B cell (primary cell): ENCODE measurements at regions of chr19 and their contacts with region 1.

Region 1: DNA sequence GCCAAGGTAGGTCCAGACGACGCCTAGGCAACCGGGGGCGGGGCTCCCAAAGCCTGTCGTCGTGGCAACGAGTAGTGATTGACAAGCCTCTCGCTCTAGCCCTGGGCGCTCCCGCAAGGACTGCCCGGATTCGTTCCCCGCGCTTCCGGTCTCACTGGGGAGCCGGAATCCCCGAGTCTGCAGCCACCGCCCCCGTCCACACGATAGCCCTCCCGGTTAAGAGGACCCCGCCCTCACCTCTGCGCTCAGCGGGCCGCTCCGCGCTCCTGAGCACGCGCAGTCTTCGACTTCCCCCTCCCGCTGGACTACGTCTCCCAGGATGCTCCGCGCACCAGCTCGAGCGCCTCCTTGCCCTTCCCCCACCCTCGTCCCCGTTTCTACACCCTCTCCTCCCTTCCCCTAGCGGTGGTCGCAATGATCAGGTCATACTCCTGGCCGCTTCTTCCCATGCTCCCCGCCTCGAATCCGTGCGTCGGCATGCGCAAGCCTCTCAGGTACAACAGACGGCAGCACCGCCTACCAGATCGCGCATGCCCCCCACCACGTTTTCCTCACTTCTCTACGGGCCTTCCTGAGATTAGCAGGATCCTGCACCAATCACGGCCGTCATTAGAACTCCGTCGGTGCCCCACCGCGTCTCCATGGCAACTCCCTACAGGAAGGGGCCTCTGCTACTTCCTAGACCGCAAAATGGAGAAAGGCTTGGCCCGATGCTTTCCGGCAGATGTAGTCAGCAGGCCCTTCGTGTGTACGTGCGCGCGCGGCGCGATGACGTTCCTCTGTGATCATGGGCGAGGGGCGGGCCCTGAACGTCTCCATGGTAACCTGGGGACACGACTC is at the start of gene MZF1:
- DNase-seq: peak; percentile 100
- ATAC-seq: peak; percentile 62
- H3K4me3 ChIP-seq: peak within 1 kb of the TSS; percentile 59 to 77 (median 74)
- H3K4me3 Mint-ChIP-seq: peak within 1 kb of the TSS; percentile 95
- H3K27ac ChIP-seq: peak within 1 kb of the TSS; percentile 99
- H3K27ac Mint-ChIP-seq: peak within 1 kb of the TSS; percentile 99
- H3K4me1 ChIP-seq: peaks cover 25 to 37% of the 10 kb centered on the region in 2 donors
- H3K4me1 Mint-ChIP-seq: peaks cover 41% of the 10 kb centered on the region
- H3K27me3 ChIP-seq: no peaks in the 10 kb centered on the region
- H3K27me3 Mint-ChIP-seq: no peaks in the 10 kb centered on the region
- CTCF ChIP-seq: no peak
- total RNA-seq, gene MZF1: 79.4 and 81.4 TPM in 2 replicates

Region 2: DNA sequence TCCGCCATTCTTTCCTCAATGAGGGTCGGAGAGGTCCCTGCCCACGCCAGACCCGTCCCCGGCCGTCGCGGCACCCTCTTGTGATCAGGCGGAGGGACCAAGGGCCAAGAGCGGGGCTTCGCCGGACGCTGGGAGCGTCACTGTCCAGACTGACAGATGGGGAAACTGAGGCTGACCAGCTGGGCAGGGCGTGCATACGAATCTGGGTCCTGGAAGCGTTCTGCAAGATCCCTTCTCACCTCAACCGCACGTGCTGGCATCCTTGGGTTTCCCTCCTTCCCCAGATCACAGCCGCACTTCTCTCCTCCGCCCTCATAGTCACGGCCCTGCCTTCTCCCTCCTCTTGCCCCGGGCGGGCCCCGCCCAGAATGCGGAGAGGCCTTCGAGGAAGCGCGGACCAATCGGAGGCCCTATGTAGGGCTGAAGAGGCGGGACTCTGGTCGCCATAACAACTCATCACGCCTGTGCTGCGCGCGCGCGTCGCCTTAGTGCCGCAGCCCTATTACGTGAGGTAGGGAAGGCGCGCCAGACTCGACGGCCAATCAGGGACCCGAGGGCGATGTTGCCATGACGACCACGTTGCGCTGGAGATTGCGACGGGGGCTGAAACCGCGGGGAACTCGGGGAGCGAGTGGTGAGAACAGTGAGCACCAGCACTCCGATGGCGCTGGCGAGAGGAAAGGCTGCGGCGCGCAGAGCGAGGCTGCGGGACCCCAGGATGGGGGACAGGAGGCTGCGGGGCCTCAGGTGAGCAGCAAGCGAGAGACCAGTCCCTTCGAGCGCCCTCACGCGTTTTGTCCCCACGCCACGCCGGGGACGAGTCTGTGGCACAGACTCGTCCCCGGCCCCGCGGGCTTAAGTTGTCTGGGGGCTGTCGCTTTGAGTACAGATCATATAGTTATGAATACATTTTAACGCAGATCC is 171.9 kb before region 1 on chr19:
- CTCF ChIA-PET with region 1: no interaction called
- POLR2A ChIA-PET with region 1: interaction called, 6 read pairs
- intact Hi-C with region 1: loop called (anchors 1 kb)
- DNase-seq: peak; percentile 100
- ATAC-seq: peak; percentile 97
- H3K4me3 ChIP-seq: peak overlapping the region; percentile 32 to 69 (median 64)
- H3K4me3 Mint-ChIP-seq: peak overlapping the region; percentile 89
- H3K27ac ChIP-seq: peak overlapping the region; percentile 62 to 87
- H3K27ac Mint-ChIP-seq: peak overlapping the region; percentile 91
- H3K4me1 ChIP-seq: peaks cover 7 to 15% of the 10 kb centered on the region in 2 donors
- H3K4me1 Mint-ChIP-seq: peaks cover 7% of the 10 kb centered on the region
- H3K27me3 ChIP-seq: peaks cover 0 to 19% (median 7%) of the 10 kb centered on the region in 4 experiments
- H3K27me3 Mint-ChIP-seq: peaks cover 3% of the 10 kb centered on the region
- CTCF ChIP-seq: no peak

Region 3: GRCh38 chr19:58451358-58452101 is 121.5 kb before region 1 on chr19 and contains the start of gene ZNF324B:
- CTCF ChIA-PET with region 1: no interaction called
- POLR2A ChIA-PET with region 1: no interaction called
- intact Hi-C with region 1: loop called (anchors 1 kb)
- DNase-seq: peak; percentile 97
- ATAC-seq: peak; percentile 97
- H3K4me3 ChIP-seq: peak within 1 kb of the TSS; percentile 55 to 81 (median 73)
- H3K4me3 Mint-ChIP-seq: peak within 1 kb of the TSS; percentile 93
- H3K27ac ChIP-seq: peak within 1 kb of the TSS in 1 of 2 donors; percentile 66
- H3K27ac Mint-ChIP-seq: peak within 1 kb of the TSS; percentile 85
- H3K4me1 ChIP-seq: peaks cover 5 to 12% of the 10 kb centered on the region in 2 donors
- H3K4me1 Mint-ChIP-seq: peaks cover 20% of the 10 kb centered on the region
- H3K27me3 ChIP-seq: peaks cover 0 to 24% (median 2%) of the 10 kb centered on the region in 4 experiments
- H3K27me3 Mint-ChIP-seq: peaks cover 13% of the 10 kb centered on the region
- CTCF ChIP-seq: no peak
- total RNA-seq, gene ZNF324B: 15.0 and 17.4 TPM in 2 replicates

Region 4: DNA sequence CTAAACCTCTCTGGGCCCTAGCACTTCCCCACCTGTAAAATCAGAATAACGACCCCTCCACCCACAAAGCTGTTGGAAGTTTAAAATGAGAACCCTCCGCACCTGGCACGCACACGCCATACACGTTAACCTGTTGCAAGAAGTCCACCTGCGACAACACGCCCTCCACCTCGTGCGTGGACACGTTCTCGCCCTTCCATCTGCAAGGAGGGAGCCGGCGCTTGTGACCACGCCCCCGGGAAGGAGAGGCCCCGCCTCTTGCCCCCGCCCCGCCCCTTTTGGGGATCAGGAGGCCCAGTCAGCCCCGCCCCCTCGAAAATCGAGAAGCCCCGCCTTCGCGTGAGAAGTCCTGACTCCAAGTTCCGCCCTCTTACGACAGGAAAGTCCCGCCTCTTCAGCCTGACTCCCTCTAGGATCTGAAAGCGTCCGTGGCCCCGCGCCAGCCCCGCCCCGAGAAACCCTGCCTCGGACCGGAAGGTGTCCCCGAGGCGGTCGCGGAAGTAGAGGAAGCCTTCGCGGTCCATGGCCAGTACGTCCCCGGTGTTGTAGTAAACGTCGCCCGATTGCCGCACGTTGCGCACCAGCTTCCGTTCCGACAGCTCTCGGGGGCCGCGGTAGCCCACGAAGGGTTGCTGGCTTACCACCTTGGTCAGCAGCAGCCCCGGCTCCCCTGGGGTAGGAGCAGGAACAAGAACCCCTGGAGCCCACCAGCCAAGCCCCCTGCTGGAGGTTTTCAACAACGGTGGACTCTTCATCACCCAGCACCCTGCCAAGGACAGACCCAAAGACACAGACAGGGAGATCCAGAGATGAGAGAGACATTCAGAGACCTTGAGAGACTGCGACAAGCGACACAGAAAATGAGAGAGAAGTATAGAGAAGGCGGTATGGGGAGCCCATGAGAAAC is 73.8 kb before region 1 on chr19:
- CTCF ChIA-PET with region 1: no interaction called
- POLR2A ChIA-PET with region 1: no interaction called
- intact Hi-C with region 1: loop called (anchors 1 kb)
- DNase-seq: peak; percentile 96
- ATAC-seq: peak; percentile 89
- H3K4me3 ChIP-seq: peak overlapping the region; percentile 55 to 81 (median 69)
- H3K4me3 Mint-ChIP-seq: peak overlapping the region; percentile 91
- H3K27ac ChIP-seq: peak overlapping the region; percentile 74 to 85
- H3K27ac Mint-ChIP-seq: peak overlapping the region; percentile 93
- H3K4me1 ChIP-seq: peaks cover 9 to 20% of the 10 kb centered on the region in 2 donors
- H3K4me1 Mint-ChIP-seq: peaks cover 19% of the 10 kb centered on the region
- H3K27me3 ChIP-seq: no peaks in the 10 kb centered on the region
- H3K27me3 Mint-ChIP-seq: no peaks in the 10 kb centered on the region
- CTCF ChIP-seq: peak; percentile 45

Region 5: DNA sequence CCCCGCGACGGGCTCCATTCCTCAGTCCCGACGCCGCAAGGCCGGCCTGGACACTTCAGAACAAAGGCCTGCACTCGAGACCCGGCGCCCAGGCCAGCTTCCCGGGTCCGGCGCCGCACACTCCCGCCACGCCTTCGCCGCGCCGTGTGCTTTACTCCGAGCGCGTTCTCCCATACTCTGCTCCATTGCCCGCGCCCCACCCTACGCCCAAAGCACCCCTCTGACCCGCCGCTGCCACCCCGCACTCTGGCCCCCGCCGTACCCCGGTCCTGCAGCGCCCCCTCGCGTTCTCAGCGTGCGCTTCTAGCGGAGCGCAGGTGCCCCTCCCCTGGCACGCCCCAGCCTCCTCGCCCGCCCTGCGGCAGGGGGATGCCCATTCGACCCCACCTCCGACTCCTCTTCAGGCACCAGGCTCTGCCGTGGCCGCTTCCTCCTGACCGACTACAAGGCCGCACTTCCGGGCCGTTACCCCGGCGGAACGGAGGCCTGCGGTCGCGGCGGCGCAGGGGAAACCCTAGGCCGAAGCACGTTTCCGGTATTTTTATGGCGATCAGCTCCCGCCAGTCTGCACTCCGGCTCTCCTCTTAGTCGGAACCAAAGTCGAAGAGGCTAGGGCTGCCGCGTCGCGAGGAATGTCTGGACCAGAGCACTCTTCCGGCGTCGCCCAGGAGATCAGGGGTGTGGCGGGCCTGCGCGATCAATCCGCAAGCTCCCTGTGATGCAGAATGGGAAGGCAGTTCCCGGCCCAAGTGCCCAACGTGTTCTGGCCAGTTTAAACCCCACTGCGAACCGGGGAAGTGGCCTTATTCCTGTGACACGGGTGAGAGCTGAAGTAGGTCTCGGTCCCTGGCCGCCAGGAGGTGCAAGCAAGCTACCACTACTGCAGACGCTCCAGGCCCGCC is 53.4 kb before region 1 on chr19 and contains the start of gene ZBTB45:
- CTCF ChIA-PET with region 1: interaction called, 72 read pairs
- POLR2A ChIA-PET with region 1: interaction called, 15 read pairs
- intact Hi-C with region 1: no loop called
- DNase-seq: peak; percentile 96
- ATAC-seq: peak; percentile 84
- H3K4me3 ChIP-seq: peak within 1 kb of the TSS; percentile 64 to 78 (median 71)
- H3K4me3 Mint-ChIP-seq: peak within 1 kb of the TSS; percentile 98
- H3K27ac ChIP-seq: peak within 1 kb of the TSS; percentile 76 to 96
- H3K27ac Mint-ChIP-seq: peak within 1 kb of the TSS; percentile 99
- H3K4me1 ChIP-seq: peaks cover 18 to 28% of the 10 kb centered on the region in 2 donors
- H3K4me1 Mint-ChIP-seq: peaks cover 42% of the 10 kb centered on the region
- H3K27me3 ChIP-seq: no peaks in the 10 kb centered on the region
- H3K27me3 Mint-ChIP-seq: no peaks in the 10 kb centered on the region
- CTCF ChIP-seq: peak; percentile 72
- total RNA-seq, gene ZBTB45: 20.9 and 28.4 TPM in 2 replicates

Region 6: GRCh38 chr19:58543826-58544590 is 29.0 kb before region 1 on chr19 and contains the start of gene TRIM28:
- CTCF ChIA-PET with region 1: no interaction called
- POLR2A ChIA-PET with region 1: interaction called, 6 read pairs
- intact Hi-C with region 1: loop called (anchors 1 kb)
- DNase-seq: peak; percentile 100
- ATAC-seq: peak; percentile 84
- H3K4me3 ChIP-seq: peak within 1 kb of the TSS; percentile 67 to 87 (median 82)
- H3K4me3 Mint-ChIP-seq: peak within 1 kb of the TSS; percentile 97
- H3K27ac ChIP-seq: peak within 1 kb of the TSS; percentile 96
- H3K27ac Mint-ChIP-seq: peak within 1 kb of the TSS; percentile 99
- H3K4me1 ChIP-seq: peaks cover 17 to 31% of the 10 kb centered on the region in 2 donors
- H3K4me1 Mint-ChIP-seq: peaks cover 29% of the 10 kb centered on the region
- H3K27me3 ChIP-seq: peaks cover 0 to 14% (median 0%) of the 10 kb centered on the region in 4 experiments
- H3K27me3 Mint-ChIP-seq: peaks cover 15% of the 10 kb centered on the region
- CTCF ChIP-seq: no peak
- total RNA-seq, gene TRIM28: 370 and 394 TPM in 2 replicates

Region 7: GRCh38 chr19:58558623-58559274 is 14.3 kb before region 1 on chr19:
- CTCF ChIA-PET with region 1: interaction called, 10 read pairs
- POLR2A ChIA-PET with region 1: interaction called, 23 read pairs
- intact Hi-C with region 1: loop called (anchors 1 kb)
- DNase-seq: peak; percentile 99
- ATAC-seq: peak; percentile 71
- H3K4me3 ChIP-seq: peak overlapping the region; percentile 57 to 95 (median 85)
- H3K4me3 Mint-ChIP-seq: peak overlapping the region; percentile 96
- H3K27ac ChIP-seq: peak overlapping the region; percentile 74 to 98
- H3K27ac Mint-ChIP-seq: peak overlapping the region; percentile 98
- H3K4me1 ChIP-seq: peaks cover 48 to 68% of the 10 kb centered on the region in 2 donors
- H3K4me1 Mint-ChIP-seq: peaks cover 80% of the 10 kb centered on the region
- H3K27me3 ChIP-seq: no peaks in the 10 kb centered on the region
- H3K27me3 Mint-ChIP-seq: no peaks in the 10 kb centered on the region
- CTCF ChIP-seq: no peak